OCI-LY7 (cell line): ENCODE measurements at regions of chr12 and their contacts with region 1.

Region 1: GRCh38 chr12:49130151-49131050 is 794 bp downstream of the TUBA1B start:
- DNase-seq: peak; percentile 97
- H3K4me3 ChIP-seq: peak overlapping the region; percentile 90
- H3K27ac ChIP-seq: peak overlapping the region; percentile 95
- H3K4me1 ChIP-seq: peaks cover 22% of the 10 kb centered on the region
- CTCF ChIP-seq: peak; percentile 92

Region 2: GRCh38 chr12:48851883-48852733 is 278.3 kb before region 1 on chr12 and contains the start of gene DDX23:
- CTCF ChIA-PET with region 1: no interaction called
- POLR2A ChIA-PET with region 1: no interaction called
- intact Hi-C with region 1: loop called (anchors 5 kb)
- DNase-seq: peak; percentile 97
- H3K4me3 ChIP-seq: peak within 1 kb of the TSS; percentile 98
- H3K27ac ChIP-seq: peak within 1 kb of the TSS; percentile 67
- H3K4me1 ChIP-seq: peaks cover 32% of the 10 kb centered on the region
- CTCF ChIP-seq: no peak
- total RNA-seq, gene DDX23: 91.1 and 101 TPM in 2 replicates

Region 3: GRCh38 chr12:49043856-49044258 is 86.5 kb before region 1 on chr12:
- CTCF ChIA-PET with region 1: no interaction called
- POLR2A ChIA-PET with region 1: no interaction called
- intact Hi-C with region 1: no loop called
- DNase-seq: peak; percentile 70
- H3K4me3 ChIP-seq: no peak overlapping the region
- H3K27ac ChIP-seq: no peak overlapping the region
- H3K4me1 ChIP-seq: no peaks in the 10 kb centered on the region
- CTCF ChIP-seq: peak; percentile 89

Region 4: DNA sequence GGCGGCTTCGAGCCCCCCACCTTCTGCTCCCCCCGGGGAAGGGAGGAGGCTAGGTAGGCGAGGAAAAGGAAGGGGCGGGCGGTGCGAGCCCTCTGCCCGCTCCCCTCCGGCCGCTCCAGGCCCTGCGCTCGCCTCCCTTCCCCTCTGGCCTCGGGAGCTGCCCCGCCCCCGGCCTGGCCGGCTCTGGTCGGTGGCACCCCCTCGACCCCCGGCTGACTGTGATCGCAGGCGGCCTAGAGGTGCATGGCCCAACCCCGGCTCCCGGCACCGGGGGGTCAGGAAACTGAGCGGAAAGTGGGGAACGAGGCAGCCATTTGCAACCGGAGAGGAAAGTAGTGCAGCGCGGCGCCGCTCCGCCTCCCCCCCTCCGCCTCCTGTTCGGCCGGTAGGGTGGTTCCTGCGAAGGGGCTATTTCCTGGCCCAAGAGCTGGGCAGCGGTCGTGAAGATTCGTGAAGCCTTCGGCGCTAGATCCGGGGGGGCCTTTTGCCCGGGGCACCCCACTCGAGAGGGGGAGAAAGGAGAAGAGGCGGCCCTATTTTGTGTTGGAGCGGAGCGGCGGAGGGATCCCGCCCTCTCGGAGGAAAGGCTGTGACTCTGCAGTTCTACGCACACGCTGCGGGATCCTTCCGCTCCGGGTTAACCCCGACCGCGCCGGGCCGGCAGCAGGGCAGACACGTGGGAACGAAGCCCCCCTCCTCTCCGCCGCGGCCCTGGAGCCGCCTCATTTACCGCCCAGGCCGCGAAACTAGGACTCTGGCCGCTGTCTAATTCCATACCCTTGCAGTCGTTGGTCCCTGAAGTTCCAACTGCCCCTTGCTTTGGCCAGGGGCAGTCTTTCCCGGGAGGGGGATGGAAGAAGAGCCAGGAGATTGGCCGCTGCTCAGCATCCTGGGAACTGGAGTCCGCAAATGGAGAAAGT is 69.9 kb before region 1 on chr12 and contains the start of gene KMT2D:
- CTCF ChIA-PET with region 1: no interaction called
- POLR2A ChIA-PET with region 1: interaction called, 3 read pairs
- intact Hi-C with region 1: loop called (anchors 1 kb)
- DNase-seq: peak; percentile 98
- H3K4me3 ChIP-seq: peak within 1 kb of the TSS; percentile 87
- H3K27ac ChIP-seq: peak within 1 kb of the TSS; percentile 72
- H3K4me1 ChIP-seq: peaks cover 38% of the 10 kb centered on the region
- CTCF ChIP-seq: no peak
- total RNA-seq, gene KMT2D: 41.8 and 43.2 TPM in 2 replicates

Region 5: GRCh38 chr12:49161092-49161795 is 30.8 kb after region 1 on chr12:
- CTCF ChIA-PET with region 1: no interaction called
- POLR2A ChIA-PET with region 1: interaction called, 10 read pairs
- intact Hi-C with region 1: no loop called
- DNase-seq: peak; percentile 34
- H3K4me3 ChIP-seq: peak overlapping the region; percentile 47
- H3K27ac ChIP-seq: no peak overlapping the region
- H3K4me1 ChIP-seq: peaks cover 30% of the 10 kb centered on the region
- CTCF ChIP-seq: no peak

Region 6: GRCh38 chr12:49232940-49233841 is 102.8 kb after region 1 on chr12:
- CTCF ChIA-PET with region 1: no interaction called
- POLR2A ChIA-PET with region 1: interaction called, 5 read pairs
- intact Hi-C with region 1: loop called (anchors 1 kb)
- DNase-seq: no peak
- H3K4me3 ChIP-seq: no peak overlapping the region
- H3K27ac ChIP-seq: no peak overlapping the region
- H3K4me1 ChIP-seq: peaks cover 4% of the 10 kb centered on the region
- CTCF ChIP-seq: no peak

Region 7: DNA sequence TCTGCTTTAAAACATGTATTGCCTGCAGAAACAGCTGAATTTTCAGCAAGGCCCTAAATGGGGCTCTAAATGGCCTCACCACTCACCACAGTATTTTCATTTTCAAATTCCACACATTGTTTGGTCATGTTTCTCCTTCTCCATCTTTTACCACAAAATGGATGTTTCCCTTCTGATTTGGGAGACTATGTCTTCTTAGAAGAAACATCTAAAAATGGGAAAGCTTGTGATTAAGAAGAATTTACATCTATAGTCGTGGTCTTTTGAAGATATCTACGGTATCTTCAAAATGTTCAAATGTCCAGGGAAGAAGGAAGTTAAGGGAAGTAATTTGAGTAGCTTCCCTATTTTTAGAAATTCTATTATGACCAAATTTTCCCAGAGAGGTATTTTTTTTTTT is 113.8 kb after region 1 on chr12:
- CTCF ChIA-PET with region 1: no interaction called
- POLR2A ChIA-PET with region 1: no interaction called
- intact Hi-C with region 1: no loop called
- DNase-seq: no peak
- H3K4me3 ChIP-seq: no peak overlapping the region
- H3K27ac ChIP-seq: no peak overlapping the region
- H3K4me1 ChIP-seq: no peaks in the 10 kb centered on the region
- CTCF ChIP-seq: no peak

Region 8: DNA sequence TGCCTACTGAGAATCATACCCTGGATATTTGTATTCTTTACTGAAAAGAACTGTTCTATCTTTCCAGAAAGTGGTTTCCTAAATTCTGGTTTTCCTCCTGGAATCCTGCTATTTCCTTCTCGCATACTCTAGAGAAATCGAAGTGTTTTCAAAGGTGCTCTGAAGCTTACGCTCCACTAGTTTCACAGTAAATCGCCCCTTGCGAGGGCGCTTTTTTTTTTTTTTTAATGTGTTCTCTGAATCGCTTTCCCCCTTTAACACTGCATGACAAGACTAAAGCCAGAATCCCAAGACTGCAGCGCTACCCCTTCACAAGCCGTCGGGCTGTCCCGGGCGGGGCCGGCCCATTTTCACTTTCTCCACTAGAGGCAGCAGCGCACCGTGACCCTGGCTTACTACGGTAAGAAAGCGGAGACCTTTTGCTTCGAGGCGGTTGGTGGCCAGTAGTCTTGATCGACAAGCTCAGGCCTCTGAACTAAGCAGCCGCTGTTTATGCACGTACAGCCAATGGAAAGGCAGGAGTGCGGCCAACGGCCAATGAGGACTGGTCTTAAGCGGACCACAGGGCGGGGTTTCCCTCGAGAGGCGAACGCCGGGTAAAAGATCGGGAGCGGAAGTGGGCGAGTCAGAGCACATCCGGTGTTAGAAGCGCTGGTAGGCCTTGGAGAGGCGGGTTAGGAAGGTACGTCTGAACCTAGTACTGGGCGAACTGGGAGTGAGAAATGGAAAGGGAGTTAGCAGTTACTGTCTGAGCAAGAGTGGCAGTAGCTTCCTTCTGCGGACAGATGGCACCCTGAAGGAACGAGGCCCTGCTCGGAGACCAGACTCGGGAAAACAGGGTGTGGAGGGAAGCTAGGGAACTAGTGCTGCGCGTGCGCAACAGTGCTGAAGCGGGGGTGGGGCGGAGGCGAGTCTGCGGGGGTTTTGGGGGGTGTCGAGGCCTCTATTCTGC is 610.8 kb after region 1 on chr12 and contains the start of gene TMBIM6:
- CTCF ChIA-PET with region 1: no interaction called
- POLR2A ChIA-PET with region 1: no interaction called
- intact Hi-C with region 1: loop called (anchors 5 kb)
- DNase-seq: peak; percentile 100
- H3K4me3 ChIP-seq: peak within 1 kb of the TSS; percentile 79
- H3K27ac ChIP-seq: peak within 1 kb of the TSS; percentile 86
- H3K4me1 ChIP-seq: peaks cover 26% of the 10 kb centered on the region
- CTCF ChIP-seq: peak; percentile 97
- total RNA-seq, gene TMBIM6: 116 and 120 TPM in 2 replicates